Activated B cell treated with CpG ODN at 0.5 μM for 24 hours (primary cell): ENCODE measurements at regions of chr3 and their contacts with region 1.

Region 1: DNA sequence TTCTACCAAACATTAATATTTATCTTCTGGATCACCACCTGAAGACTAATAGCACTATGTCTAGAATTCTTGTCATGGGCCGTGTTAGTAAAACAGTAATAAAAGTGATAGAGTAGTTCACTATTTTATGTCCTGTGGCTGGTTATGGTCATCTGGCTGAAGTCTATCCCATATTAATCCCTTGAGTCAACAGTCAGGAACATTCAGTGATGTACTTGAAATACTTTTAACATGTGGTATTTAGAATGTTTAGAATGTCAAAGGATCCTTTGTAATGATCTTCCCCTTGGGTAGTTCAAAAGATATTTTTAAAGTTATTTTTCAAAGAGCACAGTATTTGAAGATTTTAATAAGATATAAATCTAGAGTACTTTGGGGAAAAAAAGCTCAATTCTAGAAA is 117.0 kb downstream of the MBNL1 start:
- DNase-seq: no peak
- ATAC-seq: no peak
- H3K4me3 Mint-ChIP-seq: no peak overlapping the region
- H3K27ac Mint-ChIP-seq: peak overlapping the region; percentile 24
- H3K4me1 Mint-ChIP-seq: peaks cover 72% of the 10 kb centered on the region
- H3K27me3 Mint-ChIP-seq: no peaks in the 10 kb centered on the region
- CTCF ChIP-seq: no peak

Region 2: GRCh38 chr3:152356870-152357276 is 28.9 kb before region 1 on chr3:
- CTCF ChIA-PET with region 1: no interaction called
- POLR2A ChIA-PET with region 1: no interaction called
- intact Hi-C with region 1: loop called (anchors 5 kb)
- DNase-seq: no peak
- ATAC-seq: peak; percentile 51
- H3K4me3 Mint-ChIP-seq: no peak overlapping the region
- H3K27ac Mint-ChIP-seq: peak overlapping the region; percentile 70
- H3K4me1 Mint-ChIP-seq: peaks cover 74% of the 10 kb centered on the region
- H3K27me3 Mint-ChIP-seq: no peaks in the 10 kb centered on the region
- CTCF ChIP-seq: no peak